HepG2 (cell line): ENCODE measurements at regions of chr7 and their contacts with region 1.

Region 1: GRCh38 chr7:97016381-97017191 is 8.0 kb downstream of the DLX5 start:
- DNase-seq: peak; percentile 76
- ATAC-seq: peak; percentile 90
- H3K4me3 ChIP-seq: peak overlapping the region; percentile 77 to 83 (median 79)
- H3K27ac ChIP-seq: peak overlapping the region; percentile 79
- H3K4me1 ChIP-seq: peaks cover 26% of the 10 kb centered on the region
- H3K27me3 ChIP-seq: no peaks in the 10 kb centered on the region
- CTCF ChIP-seq: peak; percentile 75
- EP300 ChIP-seq: no peak
- POLR2A ChIP-seq: peak; percentile 56 to 82; a peak in 3 of 4 replicates
- RAD21 ChIP-seq: peak; percentile 46; the same call in 1 of the 2 replicates

Region 2: GRCh38 chr7:96933017-96933645 is 83.5 kb before region 1 on chr7:
- CTCF ChIA-PET with region 1: no interaction called
- POLR2A ChIA-PET with region 1: no interaction called
- in situ Hi-C with region 1: no loop called
- intact Hi-C with region 1: no loop called
- DNase-seq: no peak
- ATAC-seq: no peak
- H3K4me3 ChIP-seq: no peak overlapping the region
- H3K27ac ChIP-seq: no peak overlapping the region
- H3K4me1 ChIP-seq: no peaks in the 10 kb centered on the region
- H3K27me3 ChIP-seq: peaks cover 0 to 1% of the 10 kb centered on the region in 2 experiments; a peak in 2 of 5 replicates
- CTCF ChIP-seq: no peak
- EP300 ChIP-seq: no peak
- POLR2A ChIP-seq: no peak
- RAD21 ChIP-seq: no peak

Region 3: GRCh38 chr7:96949766-96950165 is 66.8 kb before region 1 on chr7:
- CTCF ChIA-PET with region 1: no interaction called
- POLR2A ChIA-PET with region 1: no interaction called
- in situ Hi-C with region 1: no loop called
- intact Hi-C with region 1: loop called (anchors 5 kb)
- DNase-seq: peak; percentile 67
- ATAC-seq: peak; percentile 84
- H3K4me3 ChIP-seq: no peak overlapping the region
- H3K27ac ChIP-seq: no peak overlapping the region
- H3K4me1 ChIP-seq: peaks cover 23% of the 10 kb centered on the region
- H3K27me3 ChIP-seq: no peaks in the 10 kb centered on the region
- CTCF ChIP-seq: no peak
- EP300 ChIP-seq: no peak
- POLR2A ChIP-seq: no peak
- RAD21 ChIP-seq: no peak